CD4-positive, alpha-beta T cell (primary cell): ENCODE measurements at regions of chr16 and their contacts with region 1.

Region 1: GRCh38 chr16:20849587-20850390 is 43.5 kb downstream of the REXO5 start:
- DNase-seq: peak; percentile 35 to 78 (median 59)
- ATAC-seq: peak; percentile 57
- H3K4me3 ChIP-seq: no peak overlapping the region
- H3K4me3 Mint-ChIP-seq: no peak overlapping the region
- H3K27ac ChIP-seq: no peak overlapping the region
- H3K27ac Mint-ChIP-seq: no peak overlapping the region
- H3K4me1 ChIP-seq: peaks cover 8% of the 10 kb centered on the region
- H3K4me1 Mint-ChIP-seq: peaks cover 13% of the 10 kb centered on the region
- H3K27me3 ChIP-seq: no peaks in the 10 kb centered on the region
- H3K27me3 Mint-ChIP-seq: no peaks in the 10 kb centered on the region
- CTCF ChIP-seq: peak; percentile 99

Region 2: DNA sequence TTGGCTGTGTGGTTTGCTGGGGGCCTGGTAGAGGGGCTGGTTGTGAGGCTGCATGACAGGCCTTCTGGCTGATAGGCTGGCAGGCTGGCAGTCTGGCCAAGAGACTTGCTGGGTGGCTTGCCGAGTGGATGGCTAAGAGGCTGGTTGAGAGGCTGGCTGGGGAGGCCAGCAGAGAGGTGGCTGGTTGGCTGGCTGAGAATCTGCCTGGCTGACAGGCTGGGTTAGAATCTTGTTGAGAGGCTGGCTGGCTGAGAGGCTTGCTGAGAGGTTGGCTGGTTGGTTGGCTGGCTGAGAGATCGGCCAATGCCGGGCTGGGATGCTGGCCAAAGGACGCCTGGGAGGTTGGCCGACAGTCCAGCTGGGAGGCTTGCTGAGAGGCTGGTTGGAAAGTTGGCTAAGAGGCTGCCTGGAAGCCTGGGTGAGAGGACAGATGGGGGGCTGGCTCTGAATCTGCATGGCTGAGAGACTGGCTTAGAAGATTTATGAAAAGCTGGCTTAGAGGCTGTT is 237.8 kb before region 1 on chr16:
- CTCF ChIA-PET with region 1: no interaction called
- POLR2A ChIA-PET with region 1: no interaction called
- intact Hi-C with region 1: no loop called
- DNase-seq: no peak
- ATAC-seq: no peak
- H3K4me3 ChIP-seq: no peak overlapping the region
- H3K4me3 Mint-ChIP-seq: no peak overlapping the region
- H3K27ac ChIP-seq: no peak overlapping the region
- H3K27ac Mint-ChIP-seq: no peak overlapping the region
- H3K4me1 ChIP-seq: no peaks in the 10 kb centered on the region
- H3K4me1 Mint-ChIP-seq: no peaks in the 10 kb centered on the region
- H3K27me3 ChIP-seq: peaks cover 5 to 12% of the 10 kb centered on the region in 2 experiments
- H3K27me3 Mint-ChIP-seq: peaks cover 38% of the 10 kb centered on the region
- CTCF ChIP-seq: no peak

Region 3: GRCh38 chr16:20874088-20874581 is 24.3 kb after region 1 on chr16:
- CTCF ChIA-PET with region 1: interaction called, 12 read pairs
- POLR2A ChIA-PET with region 1: interaction called, 4 read pairs
- intact Hi-C with region 1: loop called in 1 of 2 experiments (anchors 2 kb)
- DNase-seq: no peak
- ATAC-seq: no peak
- H3K4me3 ChIP-seq: peak overlapping the region; percentile 27
- H3K4me3 Mint-ChIP-seq: peak overlapping the region; percentile 70
- H3K27ac ChIP-seq: peak overlapping the region; percentile 27 to 67
- H3K27ac Mint-ChIP-seq: peak overlapping the region; percentile 91
- H3K4me1 ChIP-seq: peaks cover 19% of the 10 kb centered on the region
- H3K4me1 Mint-ChIP-seq: peaks cover 45% of the 10 kb centered on the region
- H3K27me3 ChIP-seq: no peaks in the 10 kb centered on the region
- H3K27me3 Mint-ChIP-seq: no peaks in the 10 kb centered on the region
- CTCF ChIP-seq: no peak

Region 4: DNA sequence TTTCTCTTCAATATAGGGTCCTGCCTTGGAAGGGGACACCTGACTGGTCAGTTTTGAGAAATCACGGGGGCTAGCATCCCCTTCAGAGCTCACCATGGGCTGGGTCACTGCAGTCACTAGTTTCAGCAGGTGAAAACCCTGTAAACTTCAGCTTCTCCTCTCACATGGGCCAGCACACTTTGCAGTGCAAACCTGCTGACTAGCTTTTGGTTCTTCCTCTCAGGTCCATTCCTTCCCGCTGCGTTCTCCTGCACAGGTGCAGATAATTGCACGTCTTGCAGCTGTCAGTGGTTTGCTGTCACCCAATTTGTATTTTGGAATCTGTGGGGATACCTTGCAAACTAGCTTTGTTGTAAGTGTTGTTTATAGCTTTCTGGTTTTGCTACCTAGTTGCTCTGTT is 145.9 kb after region 1 on chr16:
- CTCF ChIA-PET with region 1: no interaction called
- POLR2A ChIA-PET with region 1: no interaction called
- intact Hi-C with region 1: loop called in 1 of 2 experiments (anchors 5 kb)
- DNase-seq: no peak
- ATAC-seq: no peak
- H3K4me3 ChIP-seq: no peak overlapping the region
- H3K4me3 Mint-ChIP-seq: no peak overlapping the region
- H3K27ac ChIP-seq: no peak overlapping the region
- H3K27ac Mint-ChIP-seq: no peak overlapping the region
- H3K4me1 ChIP-seq: no peaks in the 10 kb centered on the region
- H3K4me1 Mint-ChIP-seq: no peaks in the 10 kb centered on the region
- H3K27me3 ChIP-seq: no peaks in the 10 kb centered on the region
- H3K27me3 Mint-ChIP-seq: no peaks in the 10 kb centered on the region
- CTCF ChIP-seq: no peak

Region 5: DNA sequence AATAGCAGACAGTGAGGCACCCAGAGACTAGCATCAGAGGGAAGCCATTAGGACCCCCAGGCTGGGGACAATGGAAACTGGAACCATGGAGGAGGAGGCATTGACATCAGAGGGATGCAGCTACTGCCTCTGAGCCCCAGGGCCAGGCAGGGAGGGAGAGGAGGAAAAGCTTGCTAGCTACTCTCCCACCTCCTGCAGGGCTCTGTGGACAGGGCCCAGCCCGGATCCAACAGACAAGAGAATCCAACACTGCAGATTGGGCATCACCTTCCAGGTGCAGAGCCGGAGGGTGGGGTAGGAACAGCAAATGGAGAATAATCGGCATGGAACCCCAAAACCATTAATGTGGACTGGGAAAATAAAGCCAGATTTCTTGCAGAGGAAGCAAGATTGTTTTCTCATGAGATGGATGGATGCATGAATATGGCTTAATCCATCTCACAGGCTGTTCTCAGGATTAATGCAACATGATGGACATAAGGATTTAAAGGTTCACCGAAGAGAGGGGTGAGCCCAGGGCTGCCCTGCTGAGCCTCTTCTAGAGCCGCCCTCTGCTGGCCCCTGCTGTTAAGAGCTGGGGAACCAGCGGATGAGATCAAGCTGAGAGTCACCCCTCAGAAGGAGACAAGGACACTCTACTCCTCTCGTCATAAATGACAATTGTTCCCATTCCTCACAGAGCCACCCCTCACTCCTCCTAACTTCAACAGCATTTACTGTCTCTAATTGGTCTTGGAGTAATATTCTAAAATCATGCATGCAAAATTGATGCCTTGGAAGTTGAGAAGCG is 252.0 kb after region 1 on chr16:
- CTCF ChIA-PET with region 1: interaction called, 3 read pairs
- POLR2A ChIA-PET with region 1: no interaction called
- intact Hi-C with region 1: loop called (anchors 5 kb)
- DNase-seq: peak in 9 of 14 experiments; percentile 2 to 40 (median 11)
- ATAC-seq: no peak
- H3K4me3 ChIP-seq: no peak overlapping the region
- H3K4me3 Mint-ChIP-seq: no peak overlapping the region
- H3K27ac ChIP-seq: no peak overlapping the region
- H3K27ac Mint-ChIP-seq: no peak overlapping the region
- H3K4me1 ChIP-seq: no peaks in the 10 kb centered on the region
- H3K4me1 Mint-ChIP-seq: no peaks in the 10 kb centered on the region
- H3K27me3 ChIP-seq: peaks cover 6 to 8% of the 10 kb centered on the region in 2 experiments
- H3K27me3 Mint-ChIP-seq: peaks cover 30% of the 10 kb centered on the region
- CTCF ChIP-seq: peak; percentile 14

Region 6: GRCh38 chr16:21554795-21555585 is 705.2 kb after region 1 on chr16:
- CTCF ChIA-PET with region 1: no interaction called
- POLR2A ChIA-PET with region 1: interaction called, 6 read pairs
- intact Hi-C with region 1: loop called (anchors 2 to 10 kb)
- DNase-seq: peak; percentile 82 to 95 (median 88)
- ATAC-seq: peak; percentile 99
- H3K4me3 ChIP-seq: no peak overlapping the region
- H3K4me3 Mint-ChIP-seq: peak overlapping the region; percentile 1
- H3K27ac ChIP-seq: no peak overlapping the region
- H3K27ac Mint-ChIP-seq: no peak overlapping the region
- H3K4me1 ChIP-seq: peaks cover 10% of the 10 kb centered on the region
- H3K4me1 Mint-ChIP-seq: peaks cover 6% of the 10 kb centered on the region
- H3K27me3 ChIP-seq: no peaks in the 10 kb centered on the region
- H3K27me3 Mint-ChIP-seq: no peaks in the 10 kb centered on the region
- CTCF ChIP-seq: peak; percentile 100